ENCODE measurements at regions of chr3 and their contacts with region 1.

Region 1: DNA sequence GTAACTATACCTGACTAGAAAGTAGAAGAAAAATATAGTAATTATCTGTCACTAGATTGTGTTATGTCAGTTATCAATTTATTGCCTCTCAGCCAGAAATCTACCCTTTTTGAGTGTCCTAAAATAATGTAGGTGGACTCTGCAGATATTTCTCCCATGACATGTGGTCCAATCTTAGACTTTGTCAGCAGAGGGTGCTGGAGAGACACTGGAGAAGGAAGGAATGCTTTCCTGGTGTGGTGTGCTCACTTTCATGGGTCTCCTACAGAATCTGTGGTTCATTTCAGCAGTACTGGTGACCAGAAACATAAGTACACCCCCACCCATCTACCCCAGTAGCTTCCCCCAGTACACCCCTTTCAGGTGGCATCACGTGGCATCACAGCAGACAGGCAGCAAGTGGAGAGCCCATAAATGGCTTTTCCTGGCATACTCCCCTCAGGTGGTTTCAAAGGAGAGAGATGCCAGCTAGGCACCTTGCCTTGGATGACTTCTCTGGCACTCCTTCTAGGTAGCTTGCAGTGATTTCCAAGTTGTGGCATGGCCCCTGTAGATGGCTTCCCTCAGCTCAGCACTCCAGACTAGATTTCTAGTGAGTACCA is 114.7 kb downstream of the GADL1 start:
- DNase-seq: peak; percentile 31 to 38
- ATAC-seq: peak; percentile 77 to 87; a peak in 5 of 6 replicates
- H3K4me3 ChIP-seq: no peak overlapping the region
- H3K27ac ChIP-seq: no peak overlapping the region
- H3K4me1 ChIP-seq: no peaks in the 10 kb centered on the region
- CTCF ChIP-seq: peak; percentile 47
- EP300 ChIP-seq: no peak
- POLR2A ChIP-seq: no peak
- RAD21 ChIP-seq: peak; percentile 63 to 73

Region 2: DNA sequence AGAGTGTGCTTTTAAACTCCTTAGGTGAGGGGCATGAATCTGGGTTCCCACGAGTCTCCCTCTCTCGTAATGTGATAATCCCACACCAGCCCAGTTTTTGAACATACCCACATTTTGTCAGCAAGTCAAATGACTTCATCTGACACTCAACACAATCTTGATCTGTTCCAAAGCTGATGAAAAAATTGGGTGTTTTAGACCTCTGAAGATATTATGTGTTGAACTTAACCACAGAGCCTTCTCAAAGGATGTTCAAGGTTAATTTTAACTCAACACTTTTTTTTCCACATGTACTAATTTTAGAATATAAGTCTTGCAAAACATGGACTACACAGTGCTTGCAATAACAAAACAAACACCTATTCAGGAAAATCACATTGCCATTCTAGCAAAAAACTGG is 50.3 kb before region 1 on chr3:
- CTCF ChIA-PET with region 1: no interaction called
- POLR2A ChIA-PET with region 1: no interaction called
- DNase-seq: no peak
- ATAC-seq: no peak
- H3K4me3 ChIP-seq: no peak overlapping the region
- H3K27ac ChIP-seq: no peak overlapping the region
- H3K4me1 ChIP-seq: no peaks in the 10 kb centered on the region
- CTCF ChIP-seq: no peak
- EP300 ChIP-seq: no peak
- POLR2A ChIP-seq: no peak
- RAD21 ChIP-seq: no peak

Region 3: DNA sequence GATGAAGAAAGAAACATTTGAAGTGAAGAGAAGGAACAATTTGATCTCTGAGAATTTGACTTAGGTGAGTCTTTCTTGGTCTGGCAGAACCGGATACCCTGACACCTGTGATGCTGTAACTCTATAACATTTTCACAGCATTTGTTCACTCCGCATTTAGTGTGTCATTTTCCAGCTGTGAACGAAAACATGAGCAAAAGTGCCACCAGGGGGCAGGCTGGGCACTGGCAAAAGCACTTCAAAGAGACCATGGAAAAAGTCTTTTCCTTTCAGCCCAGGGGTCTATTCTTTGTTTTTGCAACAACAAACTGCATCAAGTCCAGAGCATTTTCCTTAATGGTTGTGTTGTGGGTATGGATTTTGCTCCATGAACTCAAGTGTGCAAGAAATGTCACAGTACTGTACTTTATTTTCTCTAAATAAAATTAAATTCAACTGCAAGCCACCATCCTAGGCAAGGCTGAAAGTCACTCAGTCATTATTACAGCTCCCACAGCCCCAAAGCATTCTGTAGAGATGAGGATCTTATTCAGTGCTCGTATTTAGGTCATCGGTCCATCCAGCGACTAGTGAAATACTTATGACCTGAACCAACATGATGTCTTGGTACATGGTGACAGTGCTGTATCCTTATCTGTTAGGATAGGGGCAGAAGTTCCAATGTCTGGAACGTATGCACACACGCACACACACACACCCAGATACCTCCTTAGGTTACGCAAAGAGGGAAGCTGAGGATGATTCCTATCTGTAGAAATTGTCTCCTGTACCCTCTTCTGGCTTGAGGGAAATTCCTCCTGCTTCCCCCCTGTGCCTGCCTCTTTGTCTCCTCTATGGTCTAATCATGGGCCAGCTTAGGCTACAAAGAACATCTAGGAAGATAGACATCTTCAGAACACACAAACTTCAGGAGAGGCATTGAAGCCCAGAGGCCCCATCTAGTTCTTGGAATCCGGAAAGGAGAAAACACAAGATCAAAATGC is 10.8 kb before region 1 on chr3:
- CTCF ChIA-PET with region 1: interaction called, 18 read pairs
- POLR2A ChIA-PET with region 1: no interaction called
- DNase-seq: peak; percentile 43 to 62
- ATAC-seq: peak; percentile 66 to 82; a peak in 3 of 6 replicates
- H3K4me3 ChIP-seq: no peak overlapping the region
- H3K27ac ChIP-seq: no peak overlapping the region
- H3K4me1 ChIP-seq: peaks cover 12% of the 10 kb centered on the region
- CTCF ChIP-seq: peak; percentile 80
- EP300 ChIP-seq: no peak
- POLR2A ChIP-seq: no peak
- RAD21 ChIP-seq: peak; percentile 79 to 80

Measured in A549 (cell line).